Caco-2 (cell line): ENCODE measurements at regions of chr20 and their contacts with region 1.

Region 1: GRCh38 chr20:47663333-47664067 is 121.8 kb downstream of the SULF2 start:
- DNase-seq: peak; percentile 92 to 97
- H3K4me3 ChIP-seq: no peak overlapping the region
- H3K4me3 Mint-ChIP-seq: no peak overlapping the region
- H3K27ac Mint-ChIP-seq: peak overlapping the region; percentile 56
- H3K4me1 ChIP-seq: peaks cover 16% of the 10 kb centered on the region
- H3K4me1 Mint-ChIP-seq: peaks cover 18% of the 10 kb centered on the region
- H3K27me3 ChIP-seq: no peaks in the 10 kb centered on the region
- H3K27me3 Mint-ChIP-seq: no peaks in the 10 kb centered on the region
- CTCF ChIP-seq: peak; percentile 99 to 100

Region 2: DNA sequence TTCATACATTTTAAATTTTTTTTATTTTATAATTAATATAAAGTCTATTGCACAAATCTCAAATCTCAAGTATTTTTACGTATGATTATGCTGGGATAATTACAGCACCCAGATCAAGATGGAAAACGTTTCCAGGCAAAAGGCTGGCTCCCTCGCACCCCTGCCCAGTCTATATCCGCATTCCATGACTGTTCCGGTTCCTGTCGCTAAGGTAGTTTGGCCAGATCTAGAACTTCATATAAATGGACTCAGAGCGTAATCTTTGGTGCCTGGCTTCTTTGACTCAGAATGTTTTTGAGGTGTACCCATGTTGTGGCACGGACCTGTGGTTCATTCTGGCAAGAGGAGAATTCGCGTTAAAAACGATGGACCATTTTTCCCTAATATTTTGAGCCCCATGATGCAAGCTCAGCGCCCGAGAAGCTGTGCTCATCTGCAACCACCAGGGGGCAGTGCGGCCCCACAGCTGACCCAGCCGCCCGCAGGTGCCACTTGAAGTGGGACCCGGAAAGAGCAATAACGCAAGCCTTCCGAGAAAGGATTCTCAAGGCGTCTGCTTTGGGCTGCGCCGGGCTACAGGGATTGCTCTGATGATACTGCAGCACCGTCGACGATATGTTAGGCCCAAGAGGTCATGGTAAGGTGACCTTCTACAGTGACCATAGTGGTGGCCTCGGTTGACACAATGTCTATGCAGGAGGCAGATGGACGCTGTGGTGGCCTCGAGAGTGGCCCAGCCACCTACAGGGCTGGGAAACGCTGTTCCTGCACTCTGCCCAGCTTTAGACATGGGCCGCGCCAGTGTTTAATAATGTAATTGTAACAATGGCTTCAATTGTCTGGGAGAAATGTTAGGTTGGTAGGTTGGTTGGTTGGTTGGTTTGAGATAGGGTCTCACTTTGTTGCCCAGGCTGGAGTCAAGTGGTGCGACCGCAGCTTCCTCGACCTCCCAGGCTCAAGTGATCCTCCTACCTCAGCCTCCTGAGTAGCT is 467.1 kb before region 1 on chr20:
- CTCF ChIA-PET with region 1: no interaction called
- POLR2A ChIA-PET with region 1: no interaction called
- intact Hi-C with region 1: loop called (anchors 5 kb)
- DNase-seq: peak; percentile 90 to 95
- H3K4me3 ChIP-seq: no peak overlapping the region
- H3K4me3 Mint-ChIP-seq: peak overlapping the region; percentile 1
- H3K27ac Mint-ChIP-seq: peak overlapping the region; percentile 44
- H3K4me1 ChIP-seq: peaks cover 25% of the 10 kb centered on the region
- H3K4me1 Mint-ChIP-seq: peaks cover 27% of the 10 kb centered on the region
- H3K27me3 ChIP-seq: no peaks in the 10 kb centered on the region
- H3K27me3 Mint-ChIP-seq: no peaks in the 10 kb centered on the region
- CTCF ChIP-seq: peak; percentile 100

Region 3: GRCh38 chr20:47677635-47678453 is 14.3 kb after region 1 on chr20:
- CTCF ChIA-PET with region 1: interaction called, 16 read pairs
- POLR2A ChIA-PET with region 1: no interaction called
- intact Hi-C with region 1: no loop called
- DNase-seq: peak; percentile 87 to 93
- H3K4me3 ChIP-seq: no peak overlapping the region
- H3K4me3 Mint-ChIP-seq: no peak overlapping the region
- H3K27ac Mint-ChIP-seq: peak overlapping the region; percentile 31
- H3K4me1 ChIP-seq: peaks cover 27% of the 10 kb centered on the region
- H3K4me1 Mint-ChIP-seq: no peaks in the 10 kb centered on the region
- H3K27me3 ChIP-seq: no peaks in the 10 kb centered on the region
- H3K27me3 Mint-ChIP-seq: no peaks in the 10 kb centered on the region
- CTCF ChIP-seq: peak; percentile 99 to 100

Region 4: GRCh38 chr20:47713878-47714450 is 50.5 kb after region 1 on chr20:
- CTCF ChIA-PET with region 1: interaction called, 4 read pairs
- POLR2A ChIA-PET with region 1: no interaction called
- intact Hi-C with region 1: loop called (anchors 1 kb)
- DNase-seq: no peak
- H3K4me3 ChIP-seq: no peak overlapping the region
- H3K4me3 Mint-ChIP-seq: no peak overlapping the region
- H3K27ac Mint-ChIP-seq: no peak overlapping the region
- H3K4me1 ChIP-seq: no peaks in the 10 kb centered on the region
- H3K4me1 Mint-ChIP-seq: no peaks in the 10 kb centered on the region
- H3K27me3 ChIP-seq: no peaks in the 10 kb centered on the region
- H3K27me3 Mint-ChIP-seq: no peaks in the 10 kb centered on the region
- CTCF ChIP-seq: no peak